Activated CD4-positive, alpha-beta T cell treated with anti-CD3 and anti-CD28 coated beads, Interleukin-2, amount 10 ng/mL, durations not matched to agents 24 days and 14 days (primary cell): ENCODE measurements at regions of chr7 and their contacts with region 1.

Region 1: DNA sequence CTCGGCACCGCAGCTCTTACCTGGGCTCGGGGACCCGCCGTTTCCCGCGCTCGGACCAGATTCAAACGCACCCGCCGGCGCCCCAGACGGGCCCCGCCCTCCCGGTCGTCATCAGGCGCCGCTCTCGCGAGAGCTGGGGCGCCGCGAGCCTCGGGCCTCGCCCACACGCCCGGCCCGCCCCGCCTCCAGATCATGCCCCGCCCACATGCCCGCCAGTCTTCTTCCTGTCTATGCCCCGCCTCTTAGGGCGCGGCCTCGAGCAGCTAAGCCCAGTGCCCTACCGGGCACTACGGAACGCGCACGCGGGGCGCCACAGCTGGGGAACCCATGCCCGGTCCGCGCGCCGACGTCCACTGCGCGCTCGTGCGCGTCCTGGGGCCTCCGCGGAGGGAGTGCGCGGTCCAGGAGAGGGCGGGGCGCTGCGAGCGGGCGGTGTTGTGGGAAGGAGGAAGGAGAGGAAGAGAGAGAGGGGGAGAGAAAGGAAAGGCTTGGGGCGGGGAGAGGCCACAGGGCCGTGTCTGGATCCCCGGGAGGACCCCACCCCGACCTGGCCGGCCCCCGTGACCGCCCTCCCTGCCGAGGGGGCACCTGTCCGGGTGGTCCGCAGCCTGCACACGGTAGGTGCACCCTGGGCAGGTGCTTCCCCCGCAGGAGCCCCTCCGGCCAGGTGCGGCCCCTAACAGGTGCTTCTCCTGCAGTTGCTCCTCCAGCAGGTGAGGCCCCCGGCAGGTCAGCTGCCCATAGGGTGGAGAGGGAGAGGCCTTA is at the start of gene NCAPG2:
- DNase-seq: peak; percentile 99
- H3K4me3 Mint-ChIP-seq: peak within 1 kb of the TSS; percentile 90
- H3K27ac Mint-ChIP-seq: peak within 1 kb of the TSS; percentile 93
- H3K4me1 Mint-ChIP-seq: peaks cover 41% of the 10 kb centered on the region
- H3K27me3 Mint-ChIP-seq: no peaks in the 10 kb centered on the region
- total RNA-seq, gene NCAPG2: 94.6 and 96.3 TPM in 2 replicates

Region 2: DNA sequence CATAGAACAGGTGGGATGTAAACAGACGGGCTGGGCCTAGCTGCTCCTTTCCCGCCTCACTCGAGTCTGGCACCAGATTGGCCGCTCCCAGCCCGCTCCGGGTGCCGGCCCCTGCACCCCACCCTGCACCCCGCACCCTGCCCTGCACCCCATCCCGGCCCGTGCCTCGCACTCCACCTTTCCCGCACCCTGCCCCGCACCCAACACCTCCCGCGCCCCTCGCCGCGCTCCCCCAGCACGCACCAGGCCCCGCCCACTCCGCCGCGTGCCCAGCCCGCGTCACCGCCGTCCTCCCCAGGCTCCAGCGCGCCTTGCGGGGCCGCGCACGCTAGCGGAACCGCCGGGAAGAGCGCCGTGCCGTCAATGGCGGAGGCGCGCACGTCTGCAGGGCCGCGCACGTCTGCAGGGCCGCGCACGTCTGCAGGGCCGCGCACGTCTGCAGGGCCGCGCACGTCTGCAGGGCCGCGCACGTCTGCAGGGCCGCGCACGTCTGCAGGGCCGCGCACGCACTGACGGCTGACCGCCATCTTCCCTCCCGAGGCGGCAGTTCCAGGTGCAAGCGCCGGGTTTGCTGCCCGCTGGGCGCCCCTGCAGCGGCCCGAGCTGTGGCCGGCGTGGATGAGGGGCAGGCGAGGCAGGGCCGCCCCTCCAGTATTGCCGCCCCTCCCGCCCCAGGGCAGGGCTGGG is 1566.3 kb before region 1 on chr7 and contains the start of gene UBE3C:
- intact Hi-C with region 1: loop called (anchors 10 kb)
- DNase-seq: peak; percentile 98
- H3K4me3 Mint-ChIP-seq: peak within 1 kb of the TSS; percentile 88
- H3K27ac Mint-ChIP-seq: peak within 1 kb of the TSS; percentile 99
- H3K4me1 Mint-ChIP-seq: peaks cover 31% of the 10 kb centered on the region
- H3K27me3 Mint-ChIP-seq: no peaks in the 10 kb centered on the region
- total RNA-seq, gene UBE3C: 89.9 and 95.4 TPM in 2 replicates

Region 3: GRCh38 chr7:158655931-158656441 is 48.9 kb before region 1 on chr7:
- intact Hi-C with region 1: loop called (anchors 1 kb)
- DNase-seq: peak; percentile 88
- H3K4me3 Mint-ChIP-seq: peak overlapping the region; percentile 71
- H3K27ac Mint-ChIP-seq: peak overlapping the region; percentile 92
- H3K4me1 Mint-ChIP-seq: peaks cover 24% of the 10 kb centered on the region
- H3K27me3 Mint-ChIP-seq: no peaks in the 10 kb centered on the region

Region 4: DNA sequence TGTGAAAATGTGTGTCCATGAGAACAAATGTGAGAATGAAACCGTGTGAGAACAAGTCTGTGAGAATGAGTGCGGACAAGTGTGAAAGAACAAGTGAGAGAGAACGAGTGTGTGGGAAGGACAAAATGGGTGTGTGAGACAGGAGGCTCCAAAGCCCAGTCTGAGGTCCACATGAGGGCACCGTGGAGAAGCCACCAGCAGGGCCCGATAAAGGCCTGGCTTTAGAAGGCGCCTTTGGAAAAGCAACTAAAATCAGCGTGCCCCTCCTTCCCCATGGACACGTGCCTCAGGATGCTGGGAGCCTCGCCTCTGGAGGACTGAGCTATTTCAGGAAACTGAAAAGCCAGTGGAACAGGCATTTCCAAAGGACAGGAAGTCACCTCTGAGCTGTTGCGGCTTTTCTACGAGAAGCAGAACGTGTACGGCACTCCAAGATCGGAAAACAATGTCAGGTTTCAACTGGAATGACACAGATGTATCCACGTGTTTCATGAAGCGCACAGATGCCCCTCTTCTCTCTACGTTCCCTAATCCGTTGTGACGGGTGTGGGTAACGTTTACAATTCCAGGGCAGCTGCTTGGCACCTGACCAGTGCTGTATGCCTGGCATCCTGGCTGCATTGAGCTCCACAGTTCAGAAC is 78.0 kb after region 1 on chr7:
- intact Hi-C with region 1: loop called (anchors 10 kb)
- DNase-seq: peak; percentile 66
- H3K4me3 Mint-ChIP-seq: no peak overlapping the region
- H3K27ac Mint-ChIP-seq: no peak overlapping the region
- H3K4me1 Mint-ChIP-seq: peaks cover 2% of the 10 kb centered on the region
- H3K27me3 Mint-ChIP-seq: no peaks in the 10 kb centered on the region

Region 5: GRCh38 chr7:158818325-158819213 is 113.7 kb after region 1 on chr7:
- intact Hi-C with region 1: loop called (anchors 2 kb)
- DNase-seq: peak; percentile 95
- H3K4me3 Mint-ChIP-seq: peak overlapping the region; percentile 89
- H3K27ac Mint-ChIP-seq: peak overlapping the region; percentile 96
- H3K4me1 Mint-ChIP-seq: peaks cover 81% of the 10 kb centered on the region
- H3K27me3 Mint-ChIP-seq: no peaks in the 10 kb centered on the region

Region 6: GRCh38 chr7:158856883-158857668 is 152.2 kb after region 1 on chr7:
- intact Hi-C with region 1: loop called (anchors 1 kb)
- DNase-seq: no peak
- H3K4me3 Mint-ChIP-seq: peak overlapping the region; percentile 99
- H3K27ac Mint-ChIP-seq: peak overlapping the region; percentile 51
- H3K4me1 Mint-ChIP-seq: peaks cover 28% of the 10 kb centered on the region
- H3K27me3 Mint-ChIP-seq: no peaks in the 10 kb centered on the region